ENCODE measurements at regions of chr7 and their contacts with region 1.

Region 1: GRCh38 chr7:119175911-119176627 is 951.6 kb downstream of the ANKRD7 start:
- DNase-seq: peak; percentile 79 to 83
- H3K4me3 ChIP-seq: no peak overlapping the region
- H3K4me1 ChIP-seq: peaks cover 12% of the 10 kb centered on the region
- H3K27me3 ChIP-seq: no peaks in the 10 kb centered on the region

Region 2: DNA sequence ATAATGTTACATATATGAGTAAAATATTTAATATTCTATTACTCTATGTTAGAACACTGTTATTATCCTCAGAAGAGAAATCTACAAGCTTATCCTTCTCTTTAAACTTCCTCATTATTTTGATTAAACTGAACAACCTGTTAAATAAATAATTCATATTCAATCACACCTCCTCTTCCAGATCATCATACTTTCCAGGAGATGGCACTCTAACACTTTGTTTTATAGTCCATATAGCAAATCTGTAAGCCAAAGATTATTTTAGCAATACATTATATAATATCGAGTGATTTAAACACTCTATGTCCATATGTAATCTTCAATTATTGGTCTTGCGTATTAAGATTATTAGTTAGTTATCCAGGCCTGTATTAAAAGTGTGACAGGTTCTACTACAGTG is 257.5 kb before region 1 on chr7:
- in situ Hi-C with region 1: loop called (anchors 25 kb)
- DNase-seq: peak in 1 of 2 experiments; percentile 38
- H3K4me3 ChIP-seq: no peak overlapping the region
- H3K4me1 ChIP-seq: no peaks in the 10 kb centered on the region
- H3K27me3 ChIP-seq: 0 out of 2 replicates have a peak, but pooled peaks cover 3% of the 10 kb centered on the region

Region 3: DNA sequence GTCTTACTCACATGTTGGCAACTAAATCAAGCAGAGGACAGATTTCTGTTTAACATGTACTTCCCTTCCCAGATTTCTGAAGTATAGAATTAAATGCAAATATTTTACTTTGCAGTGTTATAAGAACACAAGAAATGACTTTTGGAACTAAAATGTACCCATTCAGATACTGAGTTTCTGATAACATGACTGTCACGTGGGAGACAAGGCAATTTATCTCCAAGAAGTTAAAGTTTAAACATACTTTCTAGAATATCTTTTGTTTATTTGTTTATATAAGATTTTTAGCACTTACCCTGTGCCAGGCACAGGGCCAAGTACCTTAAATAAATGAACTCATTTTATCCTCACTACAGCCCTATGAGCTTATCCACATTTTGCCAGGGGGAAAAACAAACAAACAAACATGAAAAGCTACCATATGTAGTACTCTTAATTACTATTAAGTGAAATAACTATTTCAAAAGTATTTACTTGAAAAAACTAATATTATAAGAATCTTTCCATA is 289.8 kb after region 1 on chr7:
- in situ Hi-C with region 1: no loop called
- DNase-seq: no peak
- H3K4me3 ChIP-seq: no peak overlapping the region
- H3K4me1 ChIP-seq: no peaks in the 10 kb centered on the region
- H3K27me3 ChIP-seq: 0 out of 2 replicates have a peak, but pooled peaks cover 2% of the 10 kb centered on the region

Measured in HAP-1 (cell line).